ENCODE measurements at regions of chr4 and their contacts with region 1.

Region 1: GRCh38 chr4:146175541-146176453 is at the start of gene LSM6:
- DNase-seq: peak; percentile 95
- H3K4me3 Mint-ChIP-seq: peak within 1 kb of the TSS; percentile 84
- H3K27ac Mint-ChIP-seq: peak within 1 kb of the TSS; percentile 89
- H3K4me1 Mint-ChIP-seq: peaks cover 27% of the 10 kb centered on the region
- H3K27me3 Mint-ChIP-seq: no peaks in the 10 kb centered on the region
- total RNA-seq, gene LSM6: 60.4 and 60.7 TPM in 2 replicates

Region 2: GRCh38 chr4:146095091-146095690 is 80.6 kb before region 1 on chr4:
- intact Hi-C with region 1: loop called (anchors 5 kb)
- DNase-seq: peak; percentile 77
- H3K4me3 Mint-ChIP-seq: no peak overlapping the region
- H3K27ac Mint-ChIP-seq: no peak overlapping the region
- H3K4me1 Mint-ChIP-seq: no peaks in the 10 kb centered on the region
- H3K27me3 Mint-ChIP-seq: peaks cover 10% of the 10 kb centered on the region

Region 3: DNA sequence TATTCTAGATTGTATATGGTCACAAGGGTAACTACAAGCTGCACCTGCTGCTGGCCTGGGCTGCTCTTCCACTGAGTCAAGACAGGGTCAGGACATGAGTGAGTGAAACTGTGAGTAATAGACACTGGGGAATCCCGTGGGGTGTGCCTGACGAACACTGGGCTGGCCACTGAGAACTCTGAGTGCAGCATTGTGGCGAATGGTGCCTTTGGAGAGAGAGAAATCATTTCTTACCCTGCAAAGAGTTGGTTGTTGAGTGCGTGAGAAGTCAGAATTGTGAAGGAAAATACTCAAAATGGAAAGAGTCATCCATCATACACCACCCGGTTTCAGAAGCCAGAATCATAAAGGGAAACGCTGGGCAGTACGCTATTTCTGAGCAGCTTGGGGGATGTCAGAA is 43.4 kb before region 1 on chr4:
- intact Hi-C with region 1: loop called (anchors 1 kb)
- DNase-seq: peak; percentile 73
- H3K4me3 Mint-ChIP-seq: peak overlapping the region; percentile 7
- H3K27ac Mint-ChIP-seq: peak overlapping the region; percentile 55
- H3K4me1 Mint-ChIP-seq: peaks cover 11% of the 10 kb centered on the region
- H3K27me3 Mint-ChIP-seq: peaks cover 6% of the 10 kb centered on the region

Measured in activated CD4-positive, alpha-beta T cell treated with anti-CD3 and anti-CD28 coated beads, Interleukin-2, amount 10 ng/mL, durations not matched to agents 24 days and 14 days (primary cell).